Keratinocyte (primary cell): ENCODE measurements at regions of chr11 and their contacts with region 1.

Region 1: DNA sequence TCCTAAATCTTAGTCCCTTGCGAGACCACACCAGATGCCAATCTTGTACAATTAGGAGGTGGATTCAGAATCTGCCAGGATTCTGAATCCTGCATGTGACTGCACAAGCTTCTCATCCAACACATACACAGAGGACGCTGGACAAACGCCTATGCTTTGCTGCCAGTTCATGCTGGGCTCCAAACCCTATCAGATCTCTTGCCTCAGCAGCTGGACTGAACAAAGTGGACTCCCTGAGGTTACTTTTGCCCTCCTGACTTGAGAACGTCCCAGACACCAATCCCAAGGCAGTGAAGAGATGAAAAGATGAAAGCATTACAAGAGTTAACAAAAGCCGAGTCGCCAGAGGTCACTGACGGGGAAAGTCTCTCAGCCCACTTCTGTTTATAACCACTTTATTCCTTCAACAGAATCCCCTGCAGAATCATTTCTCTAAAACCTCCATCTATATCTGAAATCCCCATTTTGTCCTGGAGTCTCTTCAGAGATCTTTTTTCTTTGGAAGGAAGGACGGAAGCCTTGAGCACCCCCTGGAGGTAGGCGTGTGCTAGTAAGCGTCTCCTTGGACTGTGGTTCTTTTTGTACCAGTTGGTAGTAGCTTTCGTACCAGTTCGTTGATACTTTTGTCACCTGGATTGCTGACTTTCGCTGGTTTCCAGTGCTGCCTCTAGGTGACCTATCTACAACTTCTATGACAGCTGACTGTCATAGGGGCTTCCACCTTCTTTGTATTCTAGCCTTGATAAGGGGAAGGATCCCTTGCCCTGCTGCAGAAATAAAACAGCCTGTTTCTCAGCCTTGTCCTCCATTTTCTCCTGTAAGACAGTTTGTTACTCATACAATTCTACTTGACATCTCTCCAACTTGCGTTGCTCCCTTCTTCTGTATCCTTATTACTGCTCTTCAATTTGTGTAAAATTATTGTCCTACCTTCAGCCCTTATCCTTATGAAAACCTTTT is 26.1 kb upstream of the EED start:
- DNase-seq: no peak
- H3K4me3 ChIP-seq: peak overlapping the region in 1 of 3 experiments; percentile 8
- H3K27ac ChIP-seq: no peak overlapping the region
- H3K4me1 ChIP-seq: peaks cover 2% of the 10 kb centered on the region
- H3K27me3 ChIP-seq: no peaks in the 10 kb centered on the region
- CTCF ChIP-seq: peak; percentile 83 to 94 (median 89)

Region 2: DNA sequence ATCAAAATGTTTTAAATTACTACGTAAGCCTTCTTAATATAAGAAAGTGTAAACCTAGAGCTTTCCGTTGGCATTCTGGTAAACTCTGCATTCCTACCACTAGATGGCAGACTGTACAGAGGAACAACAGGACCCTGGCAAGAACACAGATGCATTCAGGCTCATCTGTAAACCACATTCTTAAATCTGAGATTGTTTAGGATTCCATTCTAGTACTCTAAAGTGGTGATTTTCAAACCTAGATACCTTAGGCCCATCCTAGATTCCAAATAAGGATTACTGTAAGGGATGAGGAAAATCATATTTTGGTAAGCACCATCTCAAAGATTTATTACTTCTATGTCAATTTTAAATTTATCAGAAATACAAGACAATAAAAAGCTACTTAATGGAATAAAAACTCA is 176.4 kb before region 1 on chr11:
- dilution Hi-C with region 1: loop called (anchors 25 kb)
- DNase-seq: peak; percentile 69
- H3K4me3 ChIP-seq: peak overlapping the region in 1 of 3 experiments; percentile 2
- H3K27ac ChIP-seq: peak overlapping the region; percentile 3
- H3K4me1 ChIP-seq: peaks cover 22% of the 10 kb centered on the region
- H3K27me3 ChIP-seq: no peaks in the 10 kb centered on the region
- CTCF ChIP-seq: peak; percentile 72 to 82 (median 75)

Region 3: DNA sequence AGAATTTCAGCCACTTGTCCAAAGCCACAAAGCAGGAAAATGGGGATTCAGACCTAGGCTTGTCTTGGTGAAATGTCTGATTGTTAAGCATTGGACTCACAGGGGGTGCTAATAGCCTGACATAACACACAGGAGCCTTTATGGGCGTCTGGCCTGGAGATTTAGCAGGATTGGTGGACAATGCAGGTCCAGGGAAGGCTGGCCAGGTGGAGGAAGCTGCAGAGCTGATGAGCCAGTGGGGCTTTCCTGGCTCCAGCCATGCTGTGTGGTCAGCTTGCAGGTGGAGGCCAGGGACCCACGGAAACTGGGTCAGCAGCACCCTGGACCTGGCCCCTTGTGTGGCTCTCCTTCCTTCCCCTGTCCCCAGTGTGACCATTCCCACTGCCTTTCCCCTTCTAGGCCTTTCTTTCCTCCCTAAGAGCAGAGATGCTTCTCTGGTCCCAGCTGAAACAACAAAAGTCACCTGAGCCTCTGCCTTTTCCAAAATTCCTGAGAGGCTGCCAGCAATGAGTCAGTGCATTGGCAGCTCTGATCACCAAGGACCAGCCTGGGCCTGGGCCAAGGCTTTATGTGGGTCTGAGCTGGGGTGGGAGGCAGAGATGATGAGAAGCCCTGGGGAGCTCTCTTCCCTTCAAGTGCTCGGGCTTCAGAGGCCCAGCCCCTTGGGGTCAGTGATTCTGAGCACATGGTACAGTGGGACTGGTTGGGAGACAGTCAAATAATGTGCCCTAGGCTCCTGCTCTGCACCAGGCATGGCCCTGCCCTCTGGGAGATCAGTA is 241.5 kb after region 1 on chr11:
- dilution Hi-C with region 1: no loop called
- DNase-seq: peak; percentile 68
- H3K4me3 ChIP-seq: no peak overlapping the region
- H3K27ac ChIP-seq: peak overlapping the region; percentile 52
- H3K4me1 ChIP-seq: peaks cover 44% of the 10 kb centered on the region
- H3K27me3 ChIP-seq: no peaks in the 10 kb centered on the region
- CTCF ChIP-seq: no peak